ENCODE measurements at regions of chr9 and their contacts with region 1.

Region 1: DNA sequence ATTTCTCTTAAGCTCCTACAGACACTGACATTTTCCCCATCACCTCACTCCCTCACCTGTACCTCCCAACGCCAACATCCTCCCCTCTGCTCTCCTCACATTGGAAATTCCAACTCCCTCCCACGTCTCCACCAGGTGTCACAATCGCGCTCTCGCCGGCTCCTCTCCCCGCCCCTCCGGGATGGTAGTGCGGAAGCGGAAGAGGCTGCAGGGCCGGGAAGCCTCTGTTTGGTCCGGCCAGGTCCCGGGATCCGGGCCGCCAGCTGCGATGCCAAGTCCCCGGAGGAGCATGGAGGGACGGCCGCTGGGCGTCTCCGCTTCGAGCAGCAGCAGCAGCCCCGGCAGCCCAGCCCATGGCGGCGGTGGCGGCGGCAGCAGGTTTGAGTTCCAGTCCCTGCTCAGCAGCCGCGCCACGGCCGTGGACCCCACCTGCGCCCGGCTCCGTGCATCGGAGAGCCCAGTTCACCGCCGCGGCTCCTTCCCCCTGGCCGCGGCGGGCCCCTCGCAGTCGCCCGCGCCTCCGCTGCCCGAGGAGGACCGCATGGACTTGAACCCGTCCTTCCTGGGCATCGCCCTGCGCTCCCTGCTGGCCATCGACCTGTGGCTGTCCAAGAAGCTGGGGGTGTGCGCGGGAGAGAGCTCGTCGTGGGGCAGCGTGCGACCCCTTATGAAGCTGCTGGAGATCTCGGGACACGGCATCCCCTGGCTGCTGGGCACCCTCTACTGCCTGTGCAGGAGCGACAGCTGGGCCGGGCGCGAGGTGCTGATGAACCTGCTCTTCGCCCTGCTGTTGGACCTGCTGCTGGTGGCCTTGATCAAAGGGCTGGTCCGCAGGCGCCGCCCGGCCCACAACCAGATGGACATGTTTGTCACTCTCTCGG is at the start of gene PLPP6:
- DNase-seq: peak; percentile 78
- H3K4me3 Mint-ChIP-seq: peak within 1 kb of the TSS; percentile 98
- H3K27ac Mint-ChIP-seq: peak within 1 kb of the TSS; percentile 80
- H3K4me1 Mint-ChIP-seq: peaks cover 57% of the 10 kb centered on the region
- H3K27me3 Mint-ChIP-seq: peaks cover 6% of the 10 kb centered on the region
- total RNA-seq, gene PLPP6: 9.6 to 10.3 TPM

Region 2: GRCh38 chr9:4679268-4680172 is 17.2 kb after region 1 on chr9 and contains the start of gene CDC37L1:
- CTCF ChIA-PET with region 1: interaction called, 8 read pairs
- POLR2A ChIA-PET with region 1: interaction called, 34 read pairs
- DNase-seq: peak; percentile 99
- H3K4me3 Mint-ChIP-seq: no peak within 1 kb of the TSS
- H3K27ac Mint-ChIP-seq: no peak within 1 kb of the TSS
- H3K4me1 Mint-ChIP-seq: peaks cover 3% of the 10 kb centered on the region
- H3K27me3 Mint-ChIP-seq: no peaks in the 10 kb centered on the region
- total RNA-seq, gene CDC37L1: 11.9 to 12.0 TPM

Region 3: GRCh38 chr9:4689687-4690104 is 27.3 kb after region 1 on chr9:
- CTCF ChIA-PET with region 1: no interaction called
- POLR2A ChIA-PET with region 1: no interaction called
- DNase-seq: no peak
- H3K4me3 Mint-ChIP-seq: no peak overlapping the region
- H3K27ac Mint-ChIP-seq: no peak overlapping the region
- H3K4me1 Mint-ChIP-seq: peaks cover 14% of the 10 kb centered on the region
- H3K27me3 Mint-ChIP-seq: no peaks in the 10 kb centered on the region

Region 4: DNA sequence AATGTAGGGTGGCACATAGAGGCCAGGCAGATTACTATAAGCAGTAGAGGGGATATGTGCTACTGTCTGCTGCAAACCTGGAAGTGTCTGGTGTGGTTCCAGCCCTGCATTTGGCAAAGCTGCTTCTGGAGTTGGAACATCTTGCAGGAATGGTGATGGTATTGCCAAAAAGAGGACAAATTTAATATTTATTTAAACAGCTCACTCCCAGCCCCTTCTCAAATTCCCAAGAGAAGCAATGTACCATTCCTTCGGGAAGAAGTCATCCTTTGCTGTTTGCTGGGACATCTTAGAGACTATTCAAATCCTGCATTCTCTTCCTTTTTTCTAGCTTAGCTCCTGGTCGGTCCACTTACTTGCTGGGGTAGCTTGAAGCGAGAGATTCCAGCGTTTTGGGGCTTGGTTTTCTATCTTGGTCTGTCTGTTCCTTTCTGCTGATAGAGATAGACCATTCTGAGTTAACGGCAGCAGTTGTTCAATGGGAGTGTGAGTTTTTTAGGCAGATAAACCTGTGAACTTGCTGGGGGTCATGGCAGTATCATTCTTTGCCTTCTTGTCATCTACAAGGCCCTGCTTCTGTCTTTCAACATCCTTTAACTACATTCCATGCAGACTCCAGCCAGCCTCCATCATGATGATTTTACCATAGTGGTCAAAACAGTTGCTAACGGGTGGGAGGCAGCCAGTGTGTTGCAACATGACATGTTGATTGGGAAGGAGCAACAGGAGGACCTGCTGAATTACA is 200.3 kb after region 1 on chr9:
- CTCF ChIA-PET with region 1: no interaction called
- POLR2A ChIA-PET with region 1: no interaction called
- DNase-seq: no peak
- H3K4me3 Mint-ChIP-seq: no peak overlapping the region
- H3K27ac Mint-ChIP-seq: no peak overlapping the region
- H3K4me1 Mint-ChIP-seq: peaks cover 38% of the 10 kb centered on the region
- H3K27me3 Mint-ChIP-seq: no peaks in the 10 kb centered on the region

Measured in activated CD4-positive, alpha-beta memory T cell treated with anti-CD3 and anti-CD28 coated beads, Interleukin-2, amount 10 ng/mL, durations not matched to agents 7 days and 5 days (primary cell).